Endothelial cell of umbilical vein (primary cell): ENCODE measurements at regions of chr13 and their contacts with region 1.

Region 1: GRCh38 chr13:109156181-109156935 is 526.9 kb downstream of the MYO16 start:
- DNase-seq: peak; percentile 91
- H3K4me3 ChIP-seq: no peak overlapping the region
- H3K27ac ChIP-seq: peak overlapping the region; percentile 87
- H3K4me1 ChIP-seq: peaks cover 39% of the 10 kb centered on the region
- H3K27me3 ChIP-seq: no peaks in the 10 kb centered on the region
- CTCF ChIP-seq: no peak
- POLR2A ChIP-seq: no peak

Region 2: DNA sequence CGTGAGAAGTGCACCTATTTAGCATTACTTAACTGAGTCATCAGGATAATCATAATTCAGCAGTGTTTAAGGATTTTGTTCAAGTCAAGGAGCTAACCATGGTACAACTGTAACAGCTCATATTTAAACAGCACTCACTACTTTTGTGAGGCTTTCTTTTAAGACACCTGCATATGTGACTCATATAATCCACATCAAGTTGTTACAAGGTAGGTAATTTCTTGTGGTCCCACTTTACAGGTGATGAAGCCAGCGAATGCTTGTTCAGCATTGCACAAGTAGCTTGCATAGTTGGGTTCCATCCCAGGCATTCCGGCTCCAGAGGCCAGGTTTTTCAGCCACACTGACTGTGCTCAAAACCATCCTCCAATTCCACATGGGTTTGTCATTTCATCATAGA is 42.2 kb after region 1 on chr13:
- CTCF ChIA-PET with region 1: interaction called, 3 read pairs
- POLR2A ChIA-PET with region 1: interaction called, 6 read pairs
- dilution Hi-C with region 1: no loop called
- intact Hi-C with region 1: loop called (anchors 1 kb)
- DNase-seq: peak; percentile 6
- H3K4me3 ChIP-seq: no peak overlapping the region
- H3K27ac ChIP-seq: peak overlapping the region; percentile 7
- H3K4me1 ChIP-seq: peaks cover 18% of the 10 kb centered on the region
- H3K27me3 ChIP-seq: no peaks in the 10 kb centered on the region
- CTCF ChIP-seq: no peak
- POLR2A ChIP-seq: no peak

Region 3: GRCh38 chr13:109344552-109345157 is 188.3 kb after region 1 on chr13:
- CTCF ChIA-PET with region 1: interaction called, 5 read pairs
- POLR2A ChIA-PET with region 1: no interaction called
- dilution Hi-C with region 1: no loop called
- intact Hi-C with region 1: loop called (anchors 1 kb)
- DNase-seq: peak; percentile 67
- H3K4me3 ChIP-seq: no peak overlapping the region
- H3K27ac ChIP-seq: peak overlapping the region; percentile 90
- H3K4me1 ChIP-seq: peaks cover 40% of the 10 kb centered on the region
- H3K27me3 ChIP-seq: no peaks in the 10 kb centered on the region
- CTCF ChIP-seq: no peak
- POLR2A ChIP-seq: no peak

Region 4: GRCh38 chr13:110126391-110126961 is 970.1 kb after region 1 on chr13:
- CTCF ChIA-PET with region 1: no interaction called
- POLR2A ChIA-PET with region 1: interaction called, 3 read pairs
- dilution Hi-C with region 1: no loop called
- intact Hi-C with region 1: loop called (anchors 2 kb)
- DNase-seq: peak; percentile 98
- H3K4me3 ChIP-seq: peak overlapping the region in 1 of 3 experiments; percentile 9
- H3K27ac ChIP-seq: peak overlapping the region; percentile 92
- H3K4me1 ChIP-seq: peaks cover 50% of the 10 kb centered on the region
- H3K27me3 ChIP-seq: no peaks in the 10 kb centered on the region
- CTCF ChIP-seq: no peak
- POLR2A ChIP-seq: peak; percentile 43